ENCODE measurements at regions of chr9 and their contacts with region 1.

Region 1: GRCh38 chr9:75200892-75201470 is 112.7 kb downstream of the OSTF1 start:
- DNase-seq: no peak

Region 2: DNA sequence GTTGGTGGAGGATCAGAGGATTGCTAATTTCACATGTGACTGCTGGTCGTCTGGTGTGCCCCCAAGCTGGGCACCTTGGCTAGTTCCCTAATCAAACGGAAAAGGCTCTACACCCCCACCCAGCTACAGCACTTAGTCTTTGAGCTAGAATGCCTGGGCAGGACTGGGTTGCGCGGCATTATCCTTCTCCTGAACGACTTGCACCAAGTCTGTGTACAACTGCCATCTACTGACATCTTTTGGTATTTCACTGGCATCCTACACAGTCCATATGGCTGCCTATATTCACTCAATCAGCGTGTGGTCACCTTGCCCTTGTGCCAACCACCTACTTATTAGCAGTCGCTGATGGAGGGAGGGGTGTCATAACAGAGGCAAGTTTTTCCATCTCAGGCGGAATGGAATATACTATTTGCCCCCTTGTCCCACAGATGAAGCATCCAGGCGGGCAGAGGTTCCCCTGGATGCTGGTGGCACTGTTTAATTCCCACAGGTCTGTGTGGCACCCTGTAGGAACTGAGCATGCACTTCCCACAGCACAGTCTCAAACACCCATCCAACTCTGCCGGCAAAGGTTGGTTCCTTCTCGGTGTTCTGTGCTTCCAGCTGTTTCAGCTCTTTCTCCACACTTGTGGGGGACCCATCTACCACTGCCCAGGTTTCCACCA is 37.5 kb after region 1 on chr9:
- intact Hi-C with region 1: loop called (anchors 2 kb)
- DNase-seq: peak in 4 of 10 donors; percentile 4 to 84 (median 28)

Region 3: GRCh38 chr9:75529463-75529862 is 328.5 kb after region 1 on chr9:
- intact Hi-C with region 1: no loop called
- DNase-seq: no peak

Region 4: GRCh38 chr9:76302947-76303940 is 1102.3 kb after region 1 on chr9:
- intact Hi-C with region 1: loop called (anchors 5 kb)
- DNase-seq: no peak